Activated CD4-positive, alpha-beta T cell treated with anti-CD3 and anti-CD28 coated beads for 36 hours (primary cell): ENCODE measurements at regions of chr5 and their contacts with region 1.

Region 1: DNA sequence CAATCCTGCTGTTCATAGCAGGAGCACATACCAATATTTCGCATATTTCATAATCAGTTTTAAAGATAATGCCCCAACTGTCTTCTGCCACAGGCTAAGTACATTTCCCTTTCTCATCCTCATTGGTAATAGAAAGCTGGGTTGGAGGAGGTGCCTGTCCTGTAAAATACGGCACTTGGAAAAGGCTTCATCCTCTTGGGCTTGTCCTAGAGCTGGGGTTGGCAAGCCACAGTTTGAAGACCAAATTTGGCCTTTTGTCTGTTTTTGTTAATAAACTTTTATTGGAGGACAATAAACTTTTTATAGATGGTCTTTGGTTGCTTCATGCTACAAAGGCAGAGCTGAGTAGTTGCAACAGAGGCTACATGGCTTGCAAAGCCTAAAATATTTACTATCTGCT is 997.8 kb upstream of the CDH18 start:
- DNase-seq: no peak
- ATAC-seq: no peak
- H3K4me3 Mint-ChIP-seq: no peak overlapping the region
- H3K27ac Mint-ChIP-seq: no peak overlapping the region
- H3K4me1 Mint-ChIP-seq: no peaks in the 10 kb centered on the region
- H3K27me3 Mint-ChIP-seq: no peaks in the 10 kb centered on the region

Region 2: DNA sequence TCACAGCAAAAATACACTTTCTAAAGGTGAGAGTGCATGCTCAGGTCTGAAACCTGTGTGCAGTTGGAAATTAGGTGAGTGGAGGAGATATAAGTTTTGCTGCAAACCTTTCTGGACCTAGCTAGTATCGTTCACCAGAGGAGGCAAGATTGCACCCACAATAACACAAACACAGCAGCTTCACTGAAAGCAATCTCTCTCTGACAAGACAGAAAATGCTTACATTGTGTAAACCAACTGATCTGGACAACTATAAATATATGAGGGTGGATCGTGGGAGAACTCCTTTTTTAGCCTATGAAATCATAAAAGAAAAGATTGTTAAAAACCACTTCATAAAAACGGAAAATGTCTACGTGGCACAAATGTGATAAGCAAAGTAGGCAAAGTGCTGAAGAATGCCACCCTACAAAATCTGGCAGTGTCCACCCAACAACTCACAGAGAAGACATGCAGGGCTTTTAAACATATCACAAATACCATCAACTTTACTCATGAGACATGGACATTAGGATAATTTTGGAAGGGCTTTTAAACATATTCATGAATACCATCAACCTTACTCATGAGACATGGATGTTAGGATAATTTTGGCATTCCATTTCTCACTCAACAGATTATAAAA is 1132.0 kb before region 1 on chr5:
- CTCF ChIA-PET with region 1: no interaction called
- POLR2A ChIA-PET with region 1: no interaction called
- intact Hi-C with region 1: loop called in 1 of 2 experiments (anchors 5 kb)
- DNase-seq: no peak
- ATAC-seq: no peak
- H3K4me3 Mint-ChIP-seq: no peak overlapping the region
- H3K27ac Mint-ChIP-seq: no peak overlapping the region
- H3K4me1 Mint-ChIP-seq: no peaks in the 10 kb centered on the region
- H3K27me3 Mint-ChIP-seq: no peaks in the 10 kb centered on the region

Region 3: DNA sequence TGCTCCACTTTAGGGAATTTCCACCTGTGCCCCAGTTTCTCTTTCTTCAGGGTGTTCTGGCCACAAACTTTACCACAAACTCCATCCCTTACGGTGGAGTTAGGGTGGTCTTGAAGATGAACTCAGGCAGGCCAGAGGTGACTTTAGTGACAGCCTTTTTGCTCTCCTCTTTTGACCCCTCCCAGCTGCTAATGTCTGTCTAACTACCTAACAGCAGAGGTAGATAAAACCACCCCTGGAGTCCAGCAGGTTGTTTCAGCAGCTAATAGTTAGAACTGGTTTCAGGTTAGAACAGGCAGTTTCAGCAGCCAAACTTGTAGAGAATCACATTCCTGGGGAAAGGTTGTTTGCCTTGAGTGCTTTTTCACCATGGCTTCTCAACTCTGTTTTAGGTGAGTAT is 26.4 kb before region 1 on chr5:
- CTCF ChIA-PET with region 1: no interaction called
- POLR2A ChIA-PET with region 1: no interaction called
- intact Hi-C with region 1: no loop called
- DNase-seq: no peak
- ATAC-seq: no peak
- H3K4me3 Mint-ChIP-seq: no peak overlapping the region
- H3K27ac Mint-ChIP-seq: no peak overlapping the region
- H3K4me1 Mint-ChIP-seq: no peaks in the 10 kb centered on the region
- H3K27me3 Mint-ChIP-seq: no peaks in the 10 kb centered on the region

Region 4: DNA sequence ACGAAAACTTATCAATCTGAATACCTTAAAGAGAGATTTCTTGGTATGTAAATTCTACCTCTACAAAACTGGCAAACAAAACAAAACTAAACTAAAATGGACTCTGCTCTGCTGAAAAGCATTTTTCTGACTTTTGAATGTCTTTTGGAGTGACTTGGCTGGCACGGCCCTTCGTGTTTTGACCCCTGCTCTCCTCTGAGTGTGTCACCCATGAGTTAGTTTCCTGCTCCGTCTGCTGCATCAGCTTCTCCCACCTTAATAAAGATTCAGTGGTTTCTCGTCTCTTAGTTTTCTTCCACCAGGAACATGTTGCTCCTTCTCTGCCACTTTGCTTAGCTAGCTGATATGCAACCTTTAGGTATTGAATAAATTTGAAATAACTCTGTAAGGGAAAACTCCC is 86.2 kb after region 1 on chr5:
- CTCF ChIA-PET with region 1: no interaction called
- POLR2A ChIA-PET with region 1: no interaction called
- intact Hi-C with region 1: no loop called
- DNase-seq: no peak
- ATAC-seq: no peak
- H3K4me3 Mint-ChIP-seq: no peak overlapping the region
- H3K27ac Mint-ChIP-seq: no peak overlapping the region
- H3K4me1 Mint-ChIP-seq: no peaks in the 10 kb centered on the region
- H3K27me3 Mint-ChIP-seq: no peaks in the 10 kb centered on the region